Right ventricle myocardium superior (tissue), 1 donor: ENCODE measurements at regions of chr9 and their contacts with region 1.

Region 1: DNA sequence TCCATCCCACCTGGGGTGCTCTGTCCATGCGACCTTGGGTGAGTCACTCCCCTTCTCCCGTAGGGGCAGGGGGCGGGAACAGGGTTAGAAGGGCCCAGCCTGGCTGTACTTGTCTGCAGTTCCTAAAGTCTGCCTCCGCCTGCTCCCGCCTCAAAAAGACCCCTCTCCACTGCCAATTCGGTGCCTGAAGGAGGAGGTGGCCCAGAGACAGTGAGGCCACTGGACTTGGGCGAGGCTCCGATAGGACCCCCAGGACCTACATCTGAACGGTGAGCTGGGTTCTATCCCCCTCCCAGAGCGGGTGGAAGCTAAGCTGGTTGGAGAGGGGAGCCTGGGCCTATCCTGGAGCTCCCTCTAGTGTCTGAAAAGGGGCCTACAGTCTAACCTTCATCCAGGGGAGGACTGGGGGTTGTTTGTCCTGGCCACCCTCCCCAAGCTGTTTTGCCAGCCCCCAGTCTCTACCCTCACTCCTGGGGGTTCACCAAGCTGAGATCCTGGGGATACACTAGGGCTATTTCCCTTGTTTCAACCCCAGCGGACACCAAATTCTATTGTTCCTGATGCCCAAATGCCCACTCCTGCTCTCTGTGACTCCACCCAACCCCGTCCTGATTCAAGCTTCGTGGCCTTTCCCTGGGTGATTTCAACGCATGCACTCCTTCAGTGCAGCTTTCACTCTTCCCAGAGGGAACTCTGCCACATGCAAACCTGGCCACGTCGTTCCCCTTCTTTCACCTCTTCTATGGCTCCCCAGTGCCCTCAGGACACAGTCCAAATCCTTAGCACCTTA is 6.1 kb upstream of the CRB2 start:
- DNase-seq: no peak
- ATAC-seq: peak; percentile 86

Region 2: DNA sequence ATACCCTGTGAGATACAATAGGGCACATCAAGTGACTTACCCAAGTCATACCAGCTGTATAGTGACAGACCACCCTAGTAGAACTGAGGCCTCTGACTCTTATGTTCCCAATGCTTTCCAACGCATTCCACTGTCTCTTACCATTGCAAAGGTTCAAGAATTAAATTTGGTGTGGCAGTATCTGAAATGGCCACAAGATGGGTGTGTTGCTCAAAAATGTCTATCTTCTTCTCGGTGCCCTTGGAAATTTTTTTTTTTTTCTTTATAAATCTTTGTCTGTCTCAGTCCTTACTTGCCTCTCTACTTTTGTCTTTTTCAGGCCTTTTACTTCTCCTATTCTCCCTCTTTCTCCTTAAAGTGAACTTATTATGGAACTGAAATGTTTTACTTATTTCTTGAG is 268.1 kb before region 1 on chr9:
- intact Hi-C with region 1: loop called (anchors 5 kb)
- DNase-seq: no peak
- ATAC-seq: peak; percentile 31

Region 3: GRCh38 chr9:123191260-123192079 is 158.4 kb before region 1 on chr9:
- intact Hi-C with region 1: no loop called
- DNase-seq: no peak
- ATAC-seq: no peak

Region 4: GRCh38 chr9:123262338-123262737 is 87.5 kb before region 1 on chr9:
- intact Hi-C with region 1: no loop called
- DNase-seq: no peak
- ATAC-seq: no peak